ENCODE measurements at regions of chr20 and their contacts with region 1.

Region 1: GRCh38 chr20:48986899-48987298 is 59.2 kb upstream of the CSE1L start:
- DNase-seq: peak; percentile 29
- H3K4me3 ChIP-seq: no peak overlapping the region
- H3K27ac ChIP-seq: no peak overlapping the region
- H3K4me1 ChIP-seq: peaks cover 11 to 12% of the 10 kb centered on the region in 2 experiments; a peak in 3 of 4 replicates
- H3K27me3 ChIP-seq: no peaks in the 10 kb centered on the region
- CTCF ChIP-seq: peak; percentile 55
- EP300 ChIP-seq: no peak
- RAD21 ChIP-seq: peak; percentile 64

Region 2: DNA sequence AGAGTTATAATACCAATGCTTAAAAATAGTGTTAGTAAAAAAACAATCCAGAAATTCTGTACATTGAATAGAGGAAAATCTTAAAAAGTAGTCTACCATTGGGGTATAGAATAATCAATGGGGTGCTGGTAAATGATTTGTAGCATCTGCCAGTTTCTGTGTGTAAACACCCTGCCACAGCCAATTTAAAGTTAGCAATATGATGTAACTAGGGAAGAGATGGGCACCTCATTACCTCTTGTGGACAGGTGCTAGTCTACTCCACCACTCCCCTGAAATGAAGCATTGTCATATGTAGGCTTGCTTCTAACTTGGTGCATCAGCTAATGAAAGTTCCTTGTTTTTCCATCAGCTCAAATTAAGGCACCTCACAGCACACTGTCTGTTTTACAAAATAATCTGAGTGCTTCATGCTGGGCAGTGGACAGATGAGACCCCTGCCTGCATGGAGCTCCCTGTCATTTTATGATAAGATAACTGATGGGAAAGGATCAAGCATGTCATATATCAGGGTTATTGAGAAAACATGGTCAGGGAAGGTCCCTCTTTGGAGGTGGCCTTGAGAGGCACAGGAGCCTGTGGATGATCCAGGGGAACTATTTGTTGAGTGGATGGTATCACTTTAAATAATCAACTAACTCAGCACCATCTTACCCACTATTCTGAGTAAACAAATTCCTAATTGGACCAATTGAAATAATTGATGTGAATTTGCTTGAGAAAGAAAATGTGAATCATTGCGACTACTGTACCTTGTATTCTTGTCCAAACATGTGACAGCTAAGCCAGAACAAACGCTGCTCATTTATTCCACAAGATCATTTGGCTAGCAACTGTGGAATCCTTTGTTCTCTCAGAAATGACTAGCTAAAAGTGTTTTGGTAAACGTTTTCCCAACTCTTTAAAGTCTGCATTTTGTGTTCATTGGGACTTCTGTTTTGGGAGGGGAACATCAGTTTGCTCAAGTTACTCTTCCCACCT is 13.3 kb after region 1 on chr20:
- CTCF ChIA-PET with region 1: interaction called, 12 read pairs
- POLR2A ChIA-PET with region 1: no interaction called
- DNase-seq: no peak
- H3K4me3 ChIP-seq: no peak overlapping the region
- H3K27ac ChIP-seq: no peak overlapping the region
- H3K4me1 ChIP-seq: no peaks in the 10 kb centered on the region
- H3K27me3 ChIP-seq: no peaks in the 10 kb centered on the region
- CTCF ChIP-seq: no peak
- EP300 ChIP-seq: no peak
- RAD21 ChIP-seq: no peak

Region 3: DNA sequence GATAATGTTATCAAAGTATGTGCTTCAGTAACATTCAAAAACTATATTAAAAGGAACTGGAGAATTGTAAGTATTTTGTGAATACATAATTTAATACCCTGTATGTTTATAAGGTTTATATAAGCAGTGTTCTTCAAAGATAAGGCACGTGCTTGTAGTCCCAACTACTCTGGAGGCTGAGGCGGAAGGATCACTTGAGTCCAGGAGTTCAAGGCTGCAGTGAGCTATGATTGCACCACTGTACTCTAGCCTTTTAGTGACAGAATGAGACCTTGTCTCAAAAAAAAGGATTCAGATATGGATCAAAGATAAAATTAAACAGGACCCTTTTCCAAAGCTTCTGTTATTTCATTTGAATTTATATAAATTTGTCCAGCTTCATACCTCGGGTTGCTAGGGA is 76.4 kb after region 1 on chr20:
- CTCF ChIA-PET with region 1: no interaction called
- POLR2A ChIA-PET with region 1: no interaction called
- DNase-seq: no peak
- H3K4me3 ChIP-seq: no peak overlapping the region
- H3K27ac ChIP-seq: no peak overlapping the region
- H3K4me1 ChIP-seq: no peaks in the 10 kb centered on the region
- H3K27me3 ChIP-seq: no peaks in the 10 kb centered on the region
- CTCF ChIP-seq: no peak
- EP300 ChIP-seq: no peak
- RAD21 ChIP-seq: no peak